Heart left ventricle (tissue), 16 donors: ENCODE measurements at regions of chr16 and their contacts with region 1.

Region 1: GRCh38 chr16:89873972-89874689 is 739 bp downstream of the TCF25 start:
- DNase-seq: peak; percentile 95 to 98 (median 96)
- ATAC-seq: peak; percentile 86 to 94 (median 92)
- H3K4me3 ChIP-seq: peak overlapping the region; percentile 61 to 98 (median 84)
- H3K27ac ChIP-seq: peak overlapping the region; percentile 91 to 100 (median 99)
- H3K4me1 ChIP-seq: peaks cover 0 to 24% (median 16%) of the 10 kb centered on the region in 12 donors
- H3K27me3 ChIP-seq: no peaks in the 10 kb centered on the region
- CTCF ChIP-seq: no peak
- POLR2A ChIP-seq: no peak

Region 2: DNA sequence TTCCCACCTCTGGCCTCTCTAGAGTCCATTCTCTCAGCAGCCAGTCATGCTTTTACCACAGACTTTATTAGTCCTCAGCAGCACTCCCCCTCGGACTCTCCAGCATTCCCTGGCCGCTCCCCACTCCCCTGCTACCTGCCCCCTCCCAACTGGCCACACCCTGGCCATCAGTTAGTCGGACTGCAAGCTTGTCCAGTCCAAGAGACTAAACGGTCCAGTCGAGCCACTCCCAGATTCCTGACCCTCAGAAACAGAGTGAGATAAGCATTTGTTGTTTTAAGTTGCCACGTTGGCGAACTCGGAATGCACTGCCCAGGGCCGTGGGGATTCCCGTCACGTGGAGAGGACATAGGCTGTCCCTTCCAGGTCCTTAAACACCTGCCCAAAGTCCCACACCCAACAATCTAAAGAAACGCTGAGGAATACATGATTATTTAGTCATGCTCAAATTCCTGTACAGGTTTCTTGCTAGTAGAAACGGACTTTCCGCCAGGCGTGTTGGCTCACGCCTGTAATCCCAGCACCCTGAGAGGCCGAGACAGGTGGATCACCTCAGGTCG is 371.7 kb before region 1 on chr16:
- intact Hi-C with region 1: no loop called
- DNase-seq: no peak
- ATAC-seq: no peak
- H3K4me3 ChIP-seq: no peak overlapping the region
- H3K27ac ChIP-seq: peak overlapping the region in 1 of 12 donors; percentile 1
- H3K4me1 ChIP-seq: peaks cover 4 to 35% (median 25%) of the 10 kb centered on the region in 12 donors
- H3K27me3 ChIP-seq: no peaks in the 10 kb centered on the region
- CTCF ChIP-seq: no peak
- POLR2A ChIP-seq: no peak

Region 3: GRCh38 chr16:89785523-89786155 is 88.5 kb before region 1 on chr16:
- intact Hi-C with region 1: no loop called
- DNase-seq: no peak
- ATAC-seq: no peak
- H3K4me3 ChIP-seq: no peak overlapping the region
- H3K27ac ChIP-seq: no peak overlapping the region
- H3K4me1 ChIP-seq: no peaks in the 10 kb centered on the region
- H3K27me3 ChIP-seq: no peaks in the 10 kb centered on the region
- CTCF ChIP-seq: no peak
- POLR2A ChIP-seq: no peak

Region 4: DNA sequence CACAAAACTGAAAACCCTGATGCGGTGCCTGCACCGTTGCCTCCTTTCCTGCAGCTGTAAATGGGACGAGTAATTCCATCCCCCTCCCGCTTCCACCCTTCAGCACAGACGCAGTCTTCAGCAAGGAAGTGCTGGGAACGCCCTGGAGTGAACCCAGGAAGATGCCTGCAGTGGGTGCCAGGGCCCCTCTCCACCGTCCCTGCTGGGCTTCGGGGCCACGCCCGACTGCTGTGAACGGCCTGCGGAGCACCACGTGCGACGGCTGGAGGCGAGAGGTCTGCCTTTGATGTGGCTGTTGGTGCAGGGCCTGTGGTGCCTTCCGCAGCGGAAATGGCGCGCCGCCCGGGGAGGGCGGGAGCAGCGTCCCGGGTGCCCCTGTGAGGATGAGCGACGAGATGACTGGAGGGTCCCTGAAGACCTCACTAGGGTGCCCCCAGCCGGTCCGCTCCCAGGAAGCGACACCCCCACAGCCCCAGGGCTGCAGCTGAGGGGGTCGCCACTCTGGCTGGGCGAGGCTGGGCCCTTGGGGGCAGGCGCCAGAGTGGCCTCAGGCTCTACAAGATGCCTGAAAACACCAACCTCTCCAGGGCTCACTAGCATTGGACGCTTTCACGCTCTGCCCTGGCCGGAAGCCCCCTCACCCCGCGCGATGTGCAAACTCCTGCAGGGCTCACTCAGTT is 43.8 kb after region 1 on chr16:
- intact Hi-C with region 1: loop called in 3 of 10 experiments (anchors 5 to 10 kb)
- DNase-seq: peak; percentile 74 to 90 (median 85)
- ATAC-seq: peak in 3 of 4 donors; percentile 34 to 61 (median 52)
- H3K4me3 ChIP-seq: peak overlapping the region in 11 of 12 donors; percentile 14 to 56 (median 44)
- H3K27ac ChIP-seq: peak overlapping the region in 8 of 12 donors; percentile 8 to 64 (median 50)
- H3K4me1 ChIP-seq: peaks cover 4 to 48% (median 33%) of the 10 kb centered on the region in 12 donors
- H3K27me3 ChIP-seq: peaks cover 0 to 17% (median 0%) of the 10 kb centered on the region in 9 donors
- CTCF ChIP-seq: no peak
- POLR2A ChIP-seq: peak in 1 of 2 donors; percentile 39

Region 5: GRCh38 chr16:89922884-89923690 is 49.0 kb after region 1 on chr16 and contains the start of gene TUBB3:
- intact Hi-C with region 1: loop called in 3 of 10 experiments (anchors 5 to 10 kb)
- DNase-seq: peak; percentile 72 to 90 (median 81)
- ATAC-seq: peak in 3 of 4 donors; percentile 36 to 54 (median 54)
- H3K4me3 ChIP-seq: peak within 1 kb of the TSS; percentile 58 to 80 (median 72)
- H3K27ac ChIP-seq: peak within 1 kb of the TSS; percentile 70 to 96 (median 88)
- H3K4me1 ChIP-seq: peaks cover 13 to 73% (median 40%) of the 10 kb centered on the region in 12 donors
- H3K27me3 ChIP-seq: peaks cover 0 to 43% (median 16%) of the 10 kb centered on the region in 9 donors
- CTCF ChIP-seq: no peak
- POLR2A ChIP-seq: peak; percentile 9 to 91
- total RNA-seq, gene TUBB3: 1.2 to 18.1 (median 4.1) TPM